Naive thymus-derived CD4-positive, alpha-beta T cell (primary cell): ENCODE measurements at regions of chr17 and their contacts with region 1.

Region 1: DNA sequence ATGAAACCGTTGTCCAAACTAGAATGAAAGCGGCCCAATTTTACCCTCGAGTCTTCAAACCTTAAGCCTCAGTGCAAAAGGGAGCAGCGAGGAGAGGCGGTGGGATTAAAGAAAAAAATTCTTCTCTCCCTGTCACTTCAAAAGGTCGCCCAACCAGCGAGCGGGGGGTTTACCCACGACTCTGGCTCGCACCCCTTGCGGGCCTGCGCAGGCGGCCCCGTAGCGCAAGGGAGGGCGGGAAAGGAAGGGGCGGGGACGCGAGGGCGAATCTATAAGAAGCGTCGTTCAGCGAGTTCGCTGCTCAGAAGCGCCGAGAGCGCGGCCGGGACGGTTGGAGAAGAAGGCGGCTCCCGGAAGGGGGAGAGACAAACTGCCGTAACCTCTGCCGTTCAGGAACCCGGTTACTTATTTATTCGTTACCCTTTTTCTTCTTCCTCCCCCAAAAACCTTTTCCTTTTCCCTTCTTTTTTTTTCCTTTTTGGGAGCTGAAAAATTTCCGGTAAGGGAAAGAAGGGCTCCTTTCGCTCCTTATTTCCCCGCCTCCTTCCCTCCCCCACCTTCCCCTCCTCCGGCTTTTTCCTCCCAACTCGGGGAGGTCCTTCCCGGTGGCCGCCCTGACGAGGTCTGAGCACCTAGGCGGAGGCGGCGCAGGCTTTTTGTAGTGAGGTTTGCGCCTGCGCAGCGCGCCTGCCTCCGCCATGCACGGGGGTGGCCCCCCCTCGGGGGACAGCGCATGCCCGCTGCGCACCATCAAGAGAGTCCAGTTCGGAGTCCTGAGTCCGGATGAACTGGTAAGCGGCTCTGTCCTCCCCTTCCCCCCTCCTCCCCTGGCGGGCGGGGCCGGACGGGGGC is at the start of gene POLR2A:
- DNase-seq: peak; percentile 97 to 99 (median 99)
- ATAC-seq: peak; percentile 80
- H3K4me3 ChIP-seq: peak within 1 kb of the TSS; percentile 100
- H3K4me3 Mint-ChIP-seq: peak within 1 kb of the TSS; percentile 86 to 100 (median 98)
- H3K27ac ChIP-seq: peak within 1 kb of the TSS; percentile 97
- H3K27ac Mint-ChIP-seq: peak within 1 kb of the TSS; percentile 99 to 100 (median 100)
- H3K4me1 ChIP-seq: peaks cover 38 to 55% of the 10 kb centered on the region in 2 donors
- H3K4me1 Mint-ChIP-seq: peaks cover 60 to 81% (median 72%) of the 10 kb centered on the region in 7 donors
- H3K27me3 ChIP-seq: no peaks in the 10 kb centered on the region
- H3K27me3 Mint-ChIP-seq: no peaks in the 10 kb centered on the region
- total RNA-seq, gene POLR2A: 165 to 501 (median 225) TPM

Region 2: DNA sequence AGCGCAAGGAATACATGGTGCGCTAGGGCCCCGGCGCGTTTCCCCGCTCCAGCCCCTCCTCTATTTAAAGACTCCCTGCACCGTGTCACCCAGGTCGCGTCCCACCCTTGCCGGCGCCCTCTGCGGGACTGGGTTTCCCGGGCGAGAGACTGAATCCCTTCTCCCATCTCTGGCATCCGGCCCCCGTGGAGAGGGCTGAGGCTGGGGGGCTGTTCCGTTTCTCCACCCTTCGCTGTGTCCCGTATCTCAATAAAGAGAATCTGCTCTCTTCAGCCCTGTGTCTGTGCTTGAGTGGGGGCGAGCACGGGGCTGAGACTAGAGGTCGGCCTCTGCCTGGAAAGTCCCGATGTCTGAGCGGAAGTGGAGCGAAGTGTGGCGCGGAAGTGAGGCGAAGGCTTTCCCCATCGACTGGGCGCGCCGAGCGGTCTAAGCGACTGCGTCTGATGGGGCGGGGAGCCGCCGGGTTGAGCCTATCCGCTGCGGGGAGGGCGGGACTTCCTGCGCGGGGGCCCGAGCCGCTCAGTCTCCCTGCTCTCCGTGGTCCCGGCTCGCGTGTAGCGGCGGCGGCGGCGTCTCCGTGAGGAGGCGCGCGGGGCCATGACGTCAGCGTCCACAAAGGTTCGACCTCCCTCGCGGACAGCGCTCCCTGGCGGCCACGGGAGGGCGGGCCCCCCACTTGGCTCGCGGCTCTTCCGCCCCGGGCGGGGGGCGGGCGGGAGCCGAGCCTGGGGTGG is 469.9 kb before region 1 on chr17:
- CTCF ChIA-PET with region 1: no interaction called
- POLR2A ChIA-PET with region 1: no interaction called
- intact Hi-C with region 1: loop called in 1 of 2 experiments (anchors 1 kb)
- DNase-seq: peak; percentile 96 to 98 (median 97)
- ATAC-seq: peak; percentile 89
- H3K4me3 ChIP-seq: peak overlapping the region; percentile 97
- H3K4me3 Mint-ChIP-seq: peak overlapping the region; percentile 85 to 99 (median 97)
- H3K27ac ChIP-seq: peak overlapping the region; percentile 99
- H3K27ac Mint-ChIP-seq: peak overlapping the region; percentile 97 to 100 (median 100)
- H3K4me1 ChIP-seq: peaks cover 31 to 52% of the 10 kb centered on the region in 2 donors
- H3K4me1 Mint-ChIP-seq: peaks cover 30 to 81% (median 63%) of the 10 kb centered on the region in 7 donors
- H3K27me3 ChIP-seq: no peaks in the 10 kb centered on the region
- H3K27me3 Mint-ChIP-seq: no peaks in the 10 kb centered on the region

Region 3: GRCh38 chr17:7306911-7307686 is 177.2 kb before region 1 on chr17 and contains the start of gene EIF5A:
- CTCF ChIA-PET with region 1: no interaction called
- POLR2A ChIA-PET with region 1: interaction called, 4 read pairs
- intact Hi-C with region 1: loop called (anchors 1 kb)
- DNase-seq: peak; percentile 99 to 100 (median 100)
- ATAC-seq: peak; percentile 79
- H3K4me3 ChIP-seq: peak within 1 kb of the TSS; percentile 78
- H3K4me3 Mint-ChIP-seq: peak within 1 kb of the TSS; percentile 90 to 99 (median 95)
- H3K27ac ChIP-seq: peak within 1 kb of the TSS; percentile 100
- H3K27ac Mint-ChIP-seq: peak within 1 kb of the TSS; percentile 98 to 100 (median 99)
- H3K4me1 ChIP-seq: peaks cover 19 to 20% of the 10 kb centered on the region in 2 donors
- H3K4me1 Mint-ChIP-seq: peaks cover 28 to 44% (median 35%) of the 10 kb centered on the region in 7 donors
- H3K27me3 ChIP-seq: no peaks in the 10 kb centered on the region
- H3K27me3 Mint-ChIP-seq: peaks cover 0 to 9% (median 0%) of the 10 kb centered on the region in 5 donors
- total RNA-seq, gene EIF5A: 237 to 666 (median 453) TPM

Region 4: GRCh38 chr17:7403977-7404736 is 80.1 kb before region 1 on chr17 and contains the start of gene TMEM256:
- CTCF ChIA-PET with region 1: interaction called, 4 read pairs
- POLR2A ChIA-PET with region 1: interaction called, 12 read pairs
- intact Hi-C with region 1: loop called (anchors 1 kb)
- DNase-seq: peak; percentile 79 to 96 (median 91)
- ATAC-seq: peak; percentile 93
- H3K4me3 ChIP-seq: peak within 1 kb of the TSS; percentile 95
- H3K4me3 Mint-ChIP-seq: peak within 1 kb of the TSS; percentile 87 to 98 (median 96)
- H3K27ac ChIP-seq: peak within 1 kb of the TSS; percentile 78
- H3K27ac Mint-ChIP-seq: peak within 1 kb of the TSS; percentile 91 to 100 (median 96)
- H3K4me1 ChIP-seq: peaks cover 9 to 10% of the 10 kb centered on the region in 2 donors
- H3K4me1 Mint-ChIP-seq: peaks cover 8 to 25% (median 21%) of the 10 kb centered on the region in 7 donors
- H3K27me3 ChIP-seq: no peaks in the 10 kb centered on the region
- H3K27me3 Mint-ChIP-seq: peaks cover 0 to 23% (median 0%) of the 10 kb centered on the region in 5 donors
- total RNA-seq, gene TMEM256: 31.5 to 58.5 (median 48.2) TPM

Region 5: GRCh38 chr17:7466639-7467341 is 17.5 kb before region 1 on chr17:
- CTCF ChIA-PET with region 1: no interaction called
- POLR2A ChIA-PET with region 1: interaction called, 199 read pairs
- intact Hi-C with region 1: no loop called
- DNase-seq: no peak
- ATAC-seq: peak; percentile 72
- H3K4me3 ChIP-seq: no peak overlapping the region
- H3K4me3 Mint-ChIP-seq: peak overlapping the region in 1 of 10 donors; percentile 51
- H3K27ac ChIP-seq: no peak overlapping the region
- H3K27ac Mint-ChIP-seq: peak overlapping the region in 5 of 9 donors; percentile 26 to 49 (median 33)
- H3K4me1 ChIP-seq: peaks cover 0 to under 1% of the 10 kb centered on the region in 2 donors
- H3K4me1 Mint-ChIP-seq: peaks cover 6 to 25% (median 17%) of the 10 kb centered on the region in 7 donors
- H3K27me3 ChIP-seq: no peaks in the 10 kb centered on the region
- H3K27me3 Mint-ChIP-seq: no peaks in the 10 kb centered on the region

Region 6: DNA sequence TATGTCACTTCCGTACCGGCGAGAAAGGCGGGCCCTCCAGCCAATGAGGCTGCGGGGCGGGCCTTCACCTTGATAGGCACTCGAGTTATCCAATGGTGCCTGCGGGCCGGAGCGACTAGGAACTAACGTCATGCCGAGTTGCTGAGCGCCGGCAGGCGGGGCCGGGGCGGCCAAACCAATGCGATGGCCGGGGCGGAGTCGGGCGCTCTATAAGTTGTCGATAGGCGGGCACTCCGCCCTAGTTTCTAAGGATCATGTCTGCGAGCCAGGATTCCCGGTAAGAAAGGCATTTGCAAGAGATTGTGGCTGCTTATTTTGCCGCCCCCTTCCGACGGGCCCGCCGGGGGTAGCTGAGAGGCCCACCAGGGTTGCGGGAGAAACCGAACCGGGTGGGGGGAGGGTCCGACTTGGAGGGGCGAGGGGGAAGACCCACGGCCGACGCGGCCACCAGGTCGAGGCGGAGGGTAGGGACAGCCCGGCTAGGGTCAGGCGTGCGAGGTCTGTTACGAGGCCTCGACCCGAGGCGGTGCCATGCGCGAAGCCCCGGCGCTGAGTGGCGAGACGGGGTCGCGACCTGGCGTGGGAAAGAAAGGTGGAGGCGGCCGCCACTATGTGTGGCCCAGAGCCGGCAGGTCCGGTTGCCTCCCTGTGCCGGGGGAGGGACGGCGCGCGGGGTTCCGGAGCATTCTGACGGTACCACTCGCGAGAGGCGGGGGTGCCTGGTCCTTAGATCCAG is 88.5 kb after region 1 on chr17:
- CTCF ChIA-PET with region 1: no interaction called
- POLR2A ChIA-PET with region 1: interaction called, 12 read pairs
- intact Hi-C with region 1: loop called (anchors 1 kb)
- DNase-seq: peak; percentile 99 to 100 (median 100)
- ATAC-seq: peak; percentile 91
- H3K4me3 ChIP-seq: peak overlapping the region; percentile 91
- H3K4me3 Mint-ChIP-seq: peak overlapping the region; percentile 90 to 100 (median 98)
- H3K27ac ChIP-seq: peak overlapping the region; percentile 96
- H3K27ac Mint-ChIP-seq: peak overlapping the region; percentile 94 to 99 (median 98)
- H3K4me1 ChIP-seq: peaks cover 21 to 31% of the 10 kb centered on the region in 2 donors
- H3K4me1 Mint-ChIP-seq: peaks cover 9 to 62% (median 48%) of the 10 kb centered on the region in 7 donors
- H3K27me3 ChIP-seq: no peaks in the 10 kb centered on the region
- H3K27me3 Mint-ChIP-seq: peaks cover 0 to 5% (median 0%) of the 10 kb centered on the region in 5 donors

Region 7: DNA sequence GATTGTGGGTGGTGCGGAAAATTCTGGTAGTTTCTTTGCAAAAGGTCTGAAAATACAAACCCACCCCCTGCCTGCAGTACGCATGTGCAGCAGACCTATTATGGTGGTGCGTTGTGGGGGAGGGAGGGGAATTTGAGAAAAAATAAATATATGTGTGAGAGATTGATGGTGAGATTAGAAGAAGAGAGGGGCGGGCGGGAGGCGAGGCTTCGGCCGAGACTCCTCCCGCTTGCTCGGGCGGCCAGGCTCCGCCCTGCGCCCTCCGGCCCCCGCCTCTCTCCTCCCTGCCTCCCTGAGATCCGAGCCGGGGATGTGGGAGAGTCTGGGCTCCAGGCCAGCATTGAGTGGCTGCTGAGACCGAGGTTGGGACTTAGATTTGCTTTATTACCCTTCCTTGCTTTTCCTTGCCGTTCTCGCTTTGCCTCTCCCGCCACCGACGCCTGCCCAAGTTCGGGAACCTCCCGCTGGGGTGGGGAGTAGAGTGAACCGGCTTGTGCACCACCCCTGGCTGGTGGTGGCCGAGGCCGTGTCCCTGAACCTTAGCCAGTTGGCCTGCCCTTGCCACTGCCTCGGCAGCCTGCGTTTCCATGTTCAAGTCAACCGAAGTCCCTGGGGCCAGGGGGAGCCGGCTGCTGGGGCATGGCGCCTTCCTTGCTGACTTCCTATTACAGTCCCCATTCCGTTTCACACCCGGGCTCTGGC is 403.3 kb after region 1 on chr17:
- CTCF ChIA-PET with region 1: no interaction called
- POLR2A ChIA-PET with region 1: no interaction called
- intact Hi-C with region 1: loop called in 1 of 2 experiments (anchors 5 kb)
- DNase-seq: peak; percentile 41 to 96 (median 93)
- ATAC-seq: peak; percentile 83
- H3K4me3 ChIP-seq: peak overlapping the region; percentile 61
- H3K4me3 Mint-ChIP-seq: no peak overlapping the region
- H3K27ac ChIP-seq: peak overlapping the region; percentile 91
- H3K27ac Mint-ChIP-seq: no peak overlapping the region
- H3K4me1 ChIP-seq: peaks cover 28 to 29% of the 10 kb centered on the region in 2 donors
- H3K4me1 Mint-ChIP-seq: peaks cover 0 to 17% (median 8%) of the 10 kb centered on the region in 7 donors
- H3K27me3 ChIP-seq: no peaks in the 10 kb centered on the region
- H3K27me3 Mint-ChIP-seq: no peaks in the 10 kb centered on the region